ENCODE measurements at regions of chr20 and their contacts with region 1.

Region 1: GRCh38 chr20:15491575-15491974 is 1081.7 kb downstream of the KIF16B start:
- DNase-seq: peak; percentile 4
- H3K4me3 Mint-ChIP-seq: no peak overlapping the region
- H3K27ac Mint-ChIP-seq: no peak overlapping the region
- H3K4me1 Mint-ChIP-seq: no peaks in the 10 kb centered on the region
- H3K27me3 Mint-ChIP-seq: no peaks in the 10 kb centered on the region
- CTCF ChIP-seq: no peak

Region 2: DNA sequence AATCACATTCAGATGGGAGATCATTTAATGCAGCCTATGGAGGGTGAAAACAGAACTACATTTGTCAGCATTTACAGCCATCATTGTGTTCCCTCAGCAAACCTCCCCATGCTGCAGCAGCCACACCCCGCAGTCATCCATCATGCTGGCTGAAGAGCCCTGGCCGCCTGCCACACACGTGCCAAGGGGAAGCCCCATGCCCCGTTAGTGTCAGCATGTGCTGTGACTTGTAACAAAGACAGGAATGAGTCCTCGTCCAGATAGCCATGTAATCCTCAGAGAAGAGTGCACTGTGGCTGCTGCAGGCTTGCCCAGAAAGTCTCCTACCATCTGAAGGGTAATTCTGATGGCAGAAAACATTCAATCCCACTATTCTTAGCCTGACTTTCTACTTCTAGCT is 16.1 kb before region 1 on chr20:
- CTCF ChIA-PET with region 1: no interaction called
- intact Hi-C with region 1: no loop called
- DNase-seq: peak; percentile 20
- H3K4me3 Mint-ChIP-seq: no peak overlapping the region
- H3K27ac Mint-ChIP-seq: no peak overlapping the region
- H3K4me1 Mint-ChIP-seq: no peaks in the 10 kb centered on the region
- H3K27me3 Mint-ChIP-seq: no peaks in the 10 kb centered on the region
- CTCF ChIP-seq: no peak

Region 3: GRCh38 chr20:15930311-15931305 is 439.0 kb after region 1 on chr20:
- CTCF ChIA-PET with region 1: no interaction called
- intact Hi-C with region 1: loop called (anchors 5 kb)
- DNase-seq: no peak
- H3K4me3 Mint-ChIP-seq: no peak overlapping the region
- H3K27ac Mint-ChIP-seq: no peak overlapping the region
- H3K4me1 Mint-ChIP-seq: no peaks in the 10 kb centered on the region
- H3K27me3 Mint-ChIP-seq: no peaks in the 10 kb centered on the region
- CTCF ChIP-seq: no peak

Region 4: GRCh38 chr20:16476032-16476431 is 984.5 kb after region 1 on chr20:
- CTCF ChIA-PET with region 1: no interaction called
- intact Hi-C with region 1: loop called (anchors 10 kb)
- DNase-seq: no peak
- H3K4me3 Mint-ChIP-seq: no peak overlapping the region
- H3K27ac Mint-ChIP-seq: no peak overlapping the region
- H3K4me1 Mint-ChIP-seq: peaks cover 14% of the 10 kb centered on the region
- H3K27me3 Mint-ChIP-seq: no peaks in the 10 kb centered on the region
- CTCF ChIP-seq: no peak

Measured in Calu3 (cell line).